Endothelial cell of umbilical vein (primary cell): ENCODE measurements at regions of chr9 and their contacts with region 1.

Region 1: DNA sequence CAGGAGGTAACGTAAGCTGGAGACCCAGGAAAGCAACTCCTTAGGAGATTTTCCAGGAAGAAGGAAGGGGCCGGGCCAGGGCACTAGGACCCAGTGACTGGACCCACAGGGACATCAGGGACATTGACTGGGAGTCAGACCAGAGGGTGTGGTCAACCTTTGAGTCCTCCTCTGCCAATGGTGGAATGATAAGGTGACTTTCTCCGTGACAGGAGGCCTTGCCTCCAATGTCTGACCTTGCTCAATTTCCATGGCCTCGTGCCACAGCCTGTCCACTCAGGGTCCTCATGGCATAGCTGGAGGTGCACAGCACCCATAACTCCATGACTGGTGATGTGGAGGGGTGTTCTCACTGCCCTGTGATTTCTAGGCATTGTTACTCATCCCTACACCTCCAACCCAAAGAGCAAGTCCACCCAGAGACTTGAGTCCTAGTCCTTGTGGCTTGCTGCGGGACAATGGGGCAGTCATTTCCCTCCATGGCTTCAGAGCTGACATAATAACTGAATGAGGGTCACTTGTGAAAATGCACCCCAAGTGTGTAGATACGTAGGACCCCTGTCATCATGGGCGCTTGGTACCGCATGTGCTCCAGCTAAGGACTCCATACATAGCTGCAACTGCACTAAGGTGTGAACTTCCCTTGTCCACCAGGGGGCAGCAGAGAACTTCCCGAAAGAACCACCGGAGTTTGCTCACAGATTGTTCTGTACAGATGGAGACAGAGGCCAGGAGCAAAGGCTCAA is 4.1 kb upstream of the AMBP start:
- DNase-seq: peak; percentile 82
- H3K4me3 ChIP-seq: no peak overlapping the region
- H3K27ac ChIP-seq: no peak overlapping the region
- H3K4me1 ChIP-seq: no peaks in the 10 kb centered on the region
- H3K27me3 ChIP-seq: peaks cover 5 to 15% of the 10 kb centered on the region in 2 experiments
- CTCF ChIP-seq: peak; percentile 91 to 92
- POLR2A ChIP-seq: no peak

Region 2: GRCh38 chr9:113807173-113808061 is 274.8 kb before region 1 on chr9:
- CTCF ChIA-PET with region 1: interaction called, 4 read pairs
- POLR2A ChIA-PET with region 1: no interaction called
- dilution Hi-C with region 1: no loop called
- intact Hi-C with region 1: loop called (anchors 2 kb)
- DNase-seq: peak; percentile 73
- H3K4me3 ChIP-seq: peak overlapping the region in 1 of 3 experiments; percentile 25
- H3K27ac ChIP-seq: no peak overlapping the region
- H3K4me1 ChIP-seq: no peaks in the 10 kb centered on the region
- H3K27me3 ChIP-seq: no peaks in the 10 kb centered on the region
- CTCF ChIP-seq: peak; percentile 84 to 87
- POLR2A ChIP-seq: no peak

Region 3: GRCh38 chr9:114131808-114132549 is 49.8 kb after region 1 on chr9:
- CTCF ChIA-PET with region 1: interaction called, 11 read pairs
- POLR2A ChIA-PET with region 1: no interaction called
- dilution Hi-C with region 1: no loop called
- intact Hi-C with region 1: no loop called
- DNase-seq: no peak
- H3K4me3 ChIP-seq: no peak overlapping the region
- H3K27ac ChIP-seq: no peak overlapping the region
- H3K4me1 ChIP-seq: no peaks in the 10 kb centered on the region
- H3K27me3 ChIP-seq: peaks cover 25 to 36% of the 10 kb centered on the region in 2 experiments
- CTCF ChIP-seq: no peak
- POLR2A ChIP-seq: no peak

Region 4: DNA sequence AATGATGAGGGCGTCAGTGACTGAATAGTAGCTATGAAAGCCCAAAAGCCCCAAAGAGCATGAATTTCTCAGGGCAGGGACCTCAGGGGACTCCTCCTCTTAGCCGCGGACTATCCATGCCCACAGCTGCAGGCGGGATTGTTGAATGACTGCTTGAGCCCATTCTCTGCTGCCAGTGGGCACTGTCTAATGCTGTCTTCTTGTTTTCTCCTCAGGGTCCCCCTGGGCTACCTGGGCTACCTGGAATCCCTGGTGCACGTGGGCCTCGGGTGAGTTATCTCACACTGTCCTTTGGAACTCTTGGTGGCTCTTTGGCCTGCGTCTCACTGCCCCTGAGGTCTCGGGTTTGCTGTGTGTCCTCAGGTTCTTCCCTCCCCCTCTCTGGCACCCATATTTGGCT is 95.9 kb after region 1 on chr9:
- CTCF ChIA-PET with region 1: no interaction called
- POLR2A ChIA-PET with region 1: no interaction called
- dilution Hi-C with region 1: no loop called
- intact Hi-C with region 1: no loop called
- DNase-seq: no peak
- H3K4me3 ChIP-seq: no peak overlapping the region
- H3K27ac ChIP-seq: no peak overlapping the region
- H3K4me1 ChIP-seq: peaks cover 24% of the 10 kb centered on the region
- H3K27me3 ChIP-seq: no peaks in the 10 kb centered on the region
- CTCF ChIP-seq: no peak
- POLR2A ChIP-seq: no peak

Region 5: GRCh38 chr9:114263853-114264510 is 181.8 kb after region 1 on chr9:
- CTCF ChIA-PET with region 1: interaction called, 25 read pairs
- POLR2A ChIA-PET with region 1: no interaction called
- dilution Hi-C with region 1: no loop called
- intact Hi-C with region 1: no loop called
- DNase-seq: no peak
- H3K4me3 ChIP-seq: no peak overlapping the region
- H3K27ac ChIP-seq: no peak overlapping the region
- H3K4me1 ChIP-seq: no peaks in the 10 kb centered on the region
- H3K27me3 ChIP-seq: no peaks in the 10 kb centered on the region
- CTCF ChIP-seq: peak in 1 of 2 donors; percentile 28
- POLR2A ChIP-seq: no peak

Region 6: GRCh38 chr9:114285166-114285867 is 203.1 kb after region 1 on chr9:
- CTCF ChIA-PET with region 1: interaction called, 195 read pairs
- POLR2A ChIA-PET with region 1: no interaction called
- dilution Hi-C with region 1: loop called (anchors 25 kb)
- intact Hi-C with region 1: no loop called
- DNase-seq: peak; percentile 37
- H3K4me3 ChIP-seq: no peak overlapping the region
- H3K27ac ChIP-seq: no peak overlapping the region
- H3K4me1 ChIP-seq: no peaks in the 10 kb centered on the region
- H3K27me3 ChIP-seq: no peaks in the 10 kb centered on the region
- CTCF ChIP-seq: no peak
- POLR2A ChIP-seq: no peak